Head of caudate nucleus (tissue), 42 donors: ENCODE measurements at regions of chr15 and their contacts with region 1.

Region 1: GRCh38 chr15:38745126-38745525 is 180.5 kb upstream of the RASGRP1 start:
- DNase-seq: no peak

Region 2: DNA sequence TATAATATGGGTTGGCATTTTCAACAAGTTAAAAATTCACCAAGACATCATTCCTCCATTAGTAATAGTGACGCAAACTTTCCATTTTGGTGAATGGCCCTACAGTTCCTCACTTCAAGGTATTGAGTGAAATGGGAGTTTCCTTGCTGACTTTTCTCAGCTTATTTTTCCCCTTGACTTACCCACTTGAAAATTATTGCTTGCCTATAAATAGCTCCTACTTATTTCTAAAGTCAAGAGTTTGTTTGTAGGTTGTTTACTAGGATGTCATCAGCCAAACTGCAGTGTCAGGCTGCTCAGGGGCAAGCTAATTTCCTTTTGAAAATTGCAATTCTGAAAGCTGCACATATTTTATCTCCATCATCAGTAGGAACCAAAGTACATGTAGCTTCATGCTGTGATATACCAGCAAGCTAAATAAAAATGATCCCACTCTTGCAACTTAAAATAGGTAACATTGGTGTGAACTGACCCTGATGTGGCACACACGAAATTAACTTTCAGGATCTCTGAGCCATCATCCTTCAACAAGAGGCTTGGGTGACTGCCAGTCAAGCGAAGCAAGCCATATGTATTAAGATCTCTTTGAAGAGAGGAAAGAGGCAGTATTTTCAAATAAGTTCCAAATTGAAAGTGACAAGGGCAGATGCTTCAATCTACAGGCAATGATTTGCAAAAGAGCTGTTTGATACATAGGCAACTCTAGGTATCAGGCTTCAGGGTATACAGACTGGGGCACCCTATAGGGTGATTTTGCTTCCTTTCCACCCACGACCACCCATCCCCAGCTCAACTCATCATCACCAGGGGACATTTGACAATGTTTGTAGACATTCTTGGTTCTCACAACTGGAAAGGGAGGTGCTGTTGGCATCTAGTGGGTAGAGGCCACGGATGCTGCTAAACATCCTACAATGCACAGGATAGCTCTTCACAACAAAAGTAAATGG is 113.7 kb before region 1 on chr15:
- intact Hi-C with region 1: no loop called
- DNase-seq: no peak

Region 3: GRCh38 chr15:38809621-38810020 is 64.5 kb after region 1 on chr15:
- intact Hi-C with region 1: loop called (anchors 10 kb)
- DNase-seq: no peak

Region 4: GRCh38 chr15:38828031-38828532 is 83.0 kb after region 1 on chr15:
- intact Hi-C with region 1: no loop called
- DNase-seq: no peak

Region 5: DNA sequence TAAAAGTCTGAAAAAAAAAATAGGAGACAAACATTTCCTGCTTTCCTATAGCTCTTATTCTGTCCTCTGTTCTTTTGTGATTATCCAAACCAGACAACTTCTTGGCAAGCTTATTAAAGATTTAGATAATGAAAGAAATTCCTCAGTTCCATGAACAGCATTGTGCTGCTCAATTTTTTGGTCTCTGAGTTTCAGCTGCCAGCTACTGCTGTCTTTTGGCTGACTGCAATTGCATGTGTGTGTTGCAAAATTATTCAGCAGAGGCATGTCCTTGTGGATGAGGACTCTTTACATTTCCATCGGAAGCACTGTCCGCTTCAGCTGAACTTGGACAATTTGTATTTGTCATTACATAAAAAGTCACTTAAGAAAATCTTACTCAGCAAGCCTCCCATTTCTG is 216.8 kb after region 1 on chr15:
- intact Hi-C with region 1: no loop called
- DNase-seq: no peak

Region 6: DNA sequence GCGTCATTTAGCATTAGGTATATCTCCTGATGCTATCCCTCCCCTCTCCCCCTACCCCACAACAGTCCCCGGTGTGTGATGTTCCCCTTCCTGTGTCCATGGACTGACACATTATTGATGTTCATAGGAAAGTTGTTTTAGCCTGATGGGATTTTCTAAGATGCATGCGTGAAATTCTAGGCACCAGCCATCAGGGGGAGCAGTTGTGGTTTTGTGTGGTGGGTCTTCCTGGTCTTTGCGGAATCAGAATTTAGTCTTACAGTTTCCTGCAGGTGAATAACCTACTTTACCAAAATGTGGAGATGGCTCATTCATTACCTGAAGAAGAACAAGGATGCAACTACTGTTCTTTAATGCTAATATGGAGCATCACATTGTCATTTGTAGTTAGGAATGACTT is 380.8 kb after region 1 on chr15:
- intact Hi-C with region 1: no loop called
- DNase-seq: peak in 9 of 42 donors; percentile 2 to 43 (median 11)